Activated naive CD4-positive, alpha-beta T cell treated with anti-CD3 and anti-CD28 coated beads for 36 hours (primary cell): ENCODE measurements at regions of chr6 and their contacts with region 1.

Region 1: GRCh38 chr6:138428944-138429598 is 25.0 kb downstream of the HEBP2 start:
- DNase-seq: no peak
- H3K4me3 Mint-ChIP-seq: no peak overlapping the region
- H3K27ac Mint-ChIP-seq: no peak overlapping the region
- H3K4me1 Mint-ChIP-seq: no peaks in the 10 kb centered on the region
- H3K27me3 Mint-ChIP-seq: peaks cover 2% of the 10 kb centered on the region

Region 2: GRCh38 chr6:138455746-138456400 is 26.8 kb after region 1 on chr6:
- CTCF ChIA-PET with region 1: interaction called, 11 read pairs
- intact Hi-C with region 1: no loop called
- DNase-seq: peak; percentile 16
- H3K4me3 Mint-ChIP-seq: peak overlapping the region; percentile 9
- H3K27ac Mint-ChIP-seq: peak overlapping the region; percentile 62
- H3K4me1 Mint-ChIP-seq: peaks cover 28% of the 10 kb centered on the region
- H3K27me3 Mint-ChIP-seq: no peaks in the 10 kb centered on the region

Region 3: GRCh38 chr6:138509371-138509770 is 80.3 kb after region 1 on chr6:
- CTCF ChIA-PET with region 1: interaction called, 33 read pairs
- intact Hi-C with region 1: loop called (anchors 1 kb)
- DNase-seq: peak; percentile 78
- H3K4me3 Mint-ChIP-seq: no peak overlapping the region
- H3K27ac Mint-ChIP-seq: no peak overlapping the region
- H3K4me1 Mint-ChIP-seq: no peaks in the 10 kb centered on the region
- H3K27me3 Mint-ChIP-seq: no peaks in the 10 kb centered on the region

Region 4: DNA sequence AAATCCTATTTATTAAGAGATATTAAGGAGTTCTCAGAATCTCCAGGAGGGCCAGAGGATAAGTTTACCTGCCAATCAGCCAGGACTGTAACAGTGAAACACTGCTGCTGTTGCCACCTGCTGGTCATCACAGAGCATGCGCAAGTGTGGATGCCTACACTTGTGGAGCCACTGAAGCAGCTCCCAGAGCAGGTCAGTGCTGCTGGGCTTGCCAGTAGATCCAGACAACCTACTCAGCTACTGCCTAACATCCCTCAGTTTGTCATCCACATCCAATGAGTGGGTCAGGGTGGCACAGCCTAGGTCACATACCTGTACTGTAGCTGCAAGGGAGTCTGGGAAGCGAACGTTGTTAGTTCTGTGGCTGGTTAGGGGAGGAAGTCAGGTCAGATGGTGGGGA is 88.6 kb after region 1 on chr6:
- CTCF ChIA-PET with region 1: interaction called, 55 read pairs
- intact Hi-C with region 1: loop called (anchors 1 kb)
- DNase-seq: peak; percentile 73
- H3K4me3 Mint-ChIP-seq: no peak overlapping the region
- H3K27ac Mint-ChIP-seq: no peak overlapping the region
- H3K4me1 Mint-ChIP-seq: peaks cover 2% of the 10 kb centered on the region
- H3K27me3 Mint-ChIP-seq: peaks cover 3% of the 10 kb centered on the region

Region 5: GRCh38 chr6:138765896-138766655 is 337.0 kb after region 1 on chr6:
- CTCF ChIA-PET with region 1: interaction called, 3 read pairs
- intact Hi-C with region 1: loop called (anchors 1 kb)
- DNase-seq: no peak
- H3K4me3 Mint-ChIP-seq: no peak overlapping the region
- H3K27ac Mint-ChIP-seq: no peak overlapping the region
- H3K4me1 Mint-ChIP-seq: peaks cover 16% of the 10 kb centered on the region
- H3K27me3 Mint-ChIP-seq: no peaks in the 10 kb centered on the region